Breast epithelium (tissue), 4 donors: ENCODE measurements at regions of chr15 and their contacts with region 1.

Region 1: GRCh38 chr15:51016615-51017014 is 78.1 kb downstream of the TNFAIP8L3 start:
- DNase-seq: no peak
- H3K4me3 ChIP-seq: no peak overlapping the region
- H3K27ac ChIP-seq: no peak overlapping the region
- H3K4me1 ChIP-seq: no peaks in the 10 kb centered on the region
- H3K27me3 ChIP-seq: no peaks in the 10 kb centered on the region
- CTCF ChIP-seq: no peak
- POLR2A ChIP-seq: no peak

Region 2: DNA sequence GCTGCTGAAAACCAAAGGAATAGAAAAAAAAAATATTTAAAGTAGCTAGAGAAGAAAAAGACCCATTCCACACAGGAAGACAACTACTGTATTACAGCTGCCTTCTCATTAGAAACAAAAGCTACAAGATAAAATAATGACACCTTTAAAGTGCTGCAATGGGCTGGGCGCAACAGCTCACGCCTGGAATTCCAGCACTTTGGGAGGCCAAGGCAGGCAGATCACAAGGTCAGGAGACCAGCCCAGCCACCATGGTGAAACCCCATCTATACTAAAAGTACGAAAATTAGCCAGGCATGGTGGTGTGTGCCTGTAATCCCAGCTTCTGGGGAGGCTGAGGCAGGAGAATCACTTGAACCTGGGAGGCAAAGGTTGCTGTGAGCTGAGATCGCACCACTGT is 361.1 kb before region 1 on chr15:
- intact Hi-C with region 1: loop called (anchors 5 kb)
- DNase-seq: no peak
- H3K4me3 ChIP-seq: no peak overlapping the region
- H3K27ac ChIP-seq: no peak overlapping the region
- H3K4me1 ChIP-seq: no peaks in the 10 kb centered on the region
- H3K27me3 ChIP-seq: no peaks in the 10 kb centered on the region
- CTCF ChIP-seq: no peak
- POLR2A ChIP-seq: no peak

Region 3: GRCh38 chr15:50979041-50979440 is 37.6 kb before region 1 on chr15:
- intact Hi-C with region 1: no loop called
- DNase-seq: no peak
- H3K4me3 ChIP-seq: no peak overlapping the region
- H3K27ac ChIP-seq: no peak overlapping the region
- H3K4me1 ChIP-seq: no peaks in the 10 kb centered on the region
- H3K27me3 ChIP-seq: no peaks in the 10 kb centered on the region
- CTCF ChIP-seq: no peak
- POLR2A ChIP-seq: no peak

Region 4: GRCh38 chr15:52509500-52510245 is 1493.1 kb after region 1 on chr15:
- intact Hi-C with region 1: no loop called
- DNase-seq: no peak
- H3K4me3 ChIP-seq: no peak overlapping the region
- H3K27ac ChIP-seq: no peak overlapping the region
- H3K4me1 ChIP-seq: no peaks in the 10 kb centered on the region
- H3K27me3 ChIP-seq: no peaks in the 10 kb centered on the region
- CTCF ChIP-seq: no peak
- POLR2A ChIP-seq: no peak